B cell (primary cell): ENCODE measurements at regions of chr16 and their contacts with region 1.

Region 1: DNA sequence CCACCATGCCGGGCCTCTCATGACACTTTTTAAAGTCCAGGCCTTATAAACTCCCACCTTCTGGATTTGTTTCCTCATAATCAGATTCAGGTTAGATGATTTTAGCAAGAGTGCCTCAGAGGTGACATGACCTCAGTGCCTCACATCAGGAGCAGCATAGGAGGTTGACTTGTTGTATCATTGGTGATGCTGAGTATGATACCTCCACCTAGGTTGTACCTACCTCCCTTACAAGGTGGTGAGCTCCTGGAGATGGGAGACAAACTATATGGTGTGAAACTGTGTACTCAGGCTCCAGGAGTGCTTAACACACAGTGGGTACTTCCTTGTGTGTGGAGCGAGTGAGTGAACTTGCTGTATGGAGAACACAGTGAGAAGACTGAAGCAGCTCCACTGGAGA is 18.6 kb downstream of the NDUFAB1 start:
- DNase-seq: no peak
- ATAC-seq: no peak
- H3K4me3 ChIP-seq: no peak overlapping the region
- H3K4me3 Mint-ChIP-seq: no peak overlapping the region
- H3K27ac ChIP-seq: no peak overlapping the region
- H3K27ac Mint-ChIP-seq: no peak overlapping the region
- H3K4me1 ChIP-seq: no peaks in the 10 kb centered on the region
- H3K4me1 Mint-ChIP-seq: no peaks in the 10 kb centered on the region
- H3K27me3 ChIP-seq: no peaks in the 10 kb centered on the region
- H3K27me3 Mint-ChIP-seq: no peaks in the 10 kb centered on the region
- CTCF ChIP-seq: no peak

Region 2: DNA sequence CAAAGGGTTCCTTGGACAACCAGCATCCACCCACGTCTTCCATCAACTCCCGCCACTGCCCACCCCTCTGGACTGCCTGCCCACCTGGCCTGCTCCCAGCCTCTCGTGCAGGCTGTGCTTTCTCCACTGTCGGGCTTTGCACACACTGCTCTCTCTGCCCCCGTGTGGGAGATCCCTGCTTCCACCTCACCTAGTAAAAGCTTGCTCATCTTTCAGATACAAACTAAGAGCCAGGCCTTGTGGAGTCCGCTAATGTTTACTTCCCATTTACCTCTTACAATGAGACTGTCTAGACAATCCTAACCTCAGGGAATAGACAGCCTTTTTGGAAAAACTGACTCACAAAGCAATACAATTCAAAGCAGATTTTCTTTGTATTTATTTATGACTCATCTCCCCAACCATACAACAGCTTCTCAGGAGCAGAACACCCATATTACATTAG is 495.8 kb before region 1 on chr16:
- CTCF ChIA-PET with region 1: no interaction called
- POLR2A ChIA-PET with region 1: no interaction called
- intact Hi-C with region 1: no loop called
- DNase-seq: no peak
- ATAC-seq: no peak
- H3K4me3 ChIP-seq: no peak overlapping the region
- H3K4me3 Mint-ChIP-seq: no peak overlapping the region
- H3K27ac ChIP-seq: no peak overlapping the region
- H3K27ac Mint-ChIP-seq: no peak overlapping the region
- H3K4me1 ChIP-seq: no peaks in the 10 kb centered on the region
- H3K4me1 Mint-ChIP-seq: no peaks in the 10 kb centered on the region
- H3K27me3 ChIP-seq: no peaks in the 10 kb centered on the region
- H3K27me3 Mint-ChIP-seq: no peaks in the 10 kb centered on the region
- CTCF ChIP-seq: no peak

Region 3: DNA sequence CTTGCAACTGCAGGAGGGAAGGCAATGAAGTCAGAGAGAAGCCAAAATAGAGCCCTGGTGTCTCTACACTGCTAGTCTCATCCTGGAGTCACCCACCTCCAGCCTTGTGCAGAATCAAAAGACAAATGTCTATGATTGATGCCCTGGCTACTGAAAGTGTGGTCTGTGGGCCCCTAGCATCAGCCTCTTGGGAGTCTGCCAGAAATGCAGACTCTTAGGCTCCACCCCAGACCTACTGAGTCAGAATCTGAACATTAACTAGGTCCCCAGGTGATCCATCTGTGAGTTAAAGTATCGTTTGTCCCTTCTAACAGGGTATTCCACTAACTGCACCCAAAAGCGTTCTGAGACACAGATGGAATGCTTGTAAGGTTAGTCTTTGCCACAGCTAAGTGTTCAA is 41.6 kb before region 1 on chr16:
- CTCF ChIA-PET with region 1: no interaction called
- POLR2A ChIA-PET with region 1: interaction called, 11 read pairs
- intact Hi-C with region 1: no loop called
- DNase-seq: no peak
- ATAC-seq: no peak
- H3K4me3 ChIP-seq: no peak overlapping the region
- H3K4me3 Mint-ChIP-seq: no peak overlapping the region
- H3K27ac ChIP-seq: no peak overlapping the region
- H3K27ac Mint-ChIP-seq: no peak overlapping the region
- H3K4me1 ChIP-seq: no peaks in the 10 kb centered on the region
- H3K4me1 Mint-ChIP-seq: no peaks in the 10 kb centered on the region
- H3K27me3 ChIP-seq: no peaks in the 10 kb centered on the region
- H3K27me3 Mint-ChIP-seq: no peaks in the 10 kb centered on the region
- CTCF ChIP-seq: no peak

Region 4: DNA sequence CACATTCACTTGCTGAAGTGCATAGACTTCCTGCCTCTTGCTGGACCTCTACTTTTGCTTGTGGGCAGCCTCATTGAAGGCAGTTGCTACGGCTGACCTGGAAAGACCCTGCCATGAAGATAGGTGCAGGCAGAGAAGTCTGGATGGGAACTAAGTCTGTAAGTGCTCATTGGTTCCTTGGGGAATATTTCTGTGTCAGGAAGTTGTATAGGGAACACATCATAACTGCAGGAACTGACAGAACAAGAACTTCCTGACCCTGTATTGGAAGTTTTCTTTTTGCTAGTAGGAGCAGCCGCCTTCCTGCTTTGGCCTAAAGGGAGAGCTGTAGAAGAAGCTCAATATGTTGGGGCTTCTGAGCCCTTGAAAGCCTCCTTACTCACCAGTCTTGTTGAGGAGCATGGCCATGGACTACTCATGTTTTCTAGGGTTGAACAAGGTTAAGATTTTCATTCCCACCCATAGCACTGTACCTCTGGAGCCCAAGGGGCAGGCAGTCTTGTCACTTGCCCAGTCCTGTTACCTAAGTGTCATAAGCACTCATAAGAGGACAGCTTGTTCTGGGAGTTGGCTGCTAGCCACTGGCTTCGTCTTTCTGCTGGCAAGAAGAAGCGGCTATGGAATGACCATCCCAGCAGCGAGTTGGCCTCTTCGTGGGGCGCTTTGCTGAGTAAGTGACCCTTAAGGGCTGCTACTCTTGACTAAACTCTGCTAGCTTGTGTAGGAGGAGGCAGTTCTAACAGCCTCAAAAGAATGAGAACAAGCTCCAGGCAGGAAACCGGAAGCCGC is 12.7 kb before region 1 on chr16:
- CTCF ChIA-PET with region 1: no interaction called
- POLR2A ChIA-PET with region 1: no interaction called
- intact Hi-C with region 1: no loop called
- DNase-seq: no peak
- ATAC-seq: no peak
- H3K4me3 ChIP-seq: no peak overlapping the region
- H3K4me3 Mint-ChIP-seq: no peak overlapping the region
- H3K27ac ChIP-seq: no peak overlapping the region
- H3K27ac Mint-ChIP-seq: no peak overlapping the region
- H3K4me1 ChIP-seq: peaks cover 2 to 10% of the 10 kb centered on the region in 2 donors
- H3K4me1 Mint-ChIP-seq: peaks cover 7% of the 10 kb centered on the region
- H3K27me3 ChIP-seq: no peaks in the 10 kb centered on the region
- H3K27me3 Mint-ChIP-seq: no peaks in the 10 kb centered on the region
- CTCF ChIP-seq: no peak